T-cell (primary cell): ENCODE measurements at regions of chr4 and their contacts with region 1.

Region 1: DNA sequence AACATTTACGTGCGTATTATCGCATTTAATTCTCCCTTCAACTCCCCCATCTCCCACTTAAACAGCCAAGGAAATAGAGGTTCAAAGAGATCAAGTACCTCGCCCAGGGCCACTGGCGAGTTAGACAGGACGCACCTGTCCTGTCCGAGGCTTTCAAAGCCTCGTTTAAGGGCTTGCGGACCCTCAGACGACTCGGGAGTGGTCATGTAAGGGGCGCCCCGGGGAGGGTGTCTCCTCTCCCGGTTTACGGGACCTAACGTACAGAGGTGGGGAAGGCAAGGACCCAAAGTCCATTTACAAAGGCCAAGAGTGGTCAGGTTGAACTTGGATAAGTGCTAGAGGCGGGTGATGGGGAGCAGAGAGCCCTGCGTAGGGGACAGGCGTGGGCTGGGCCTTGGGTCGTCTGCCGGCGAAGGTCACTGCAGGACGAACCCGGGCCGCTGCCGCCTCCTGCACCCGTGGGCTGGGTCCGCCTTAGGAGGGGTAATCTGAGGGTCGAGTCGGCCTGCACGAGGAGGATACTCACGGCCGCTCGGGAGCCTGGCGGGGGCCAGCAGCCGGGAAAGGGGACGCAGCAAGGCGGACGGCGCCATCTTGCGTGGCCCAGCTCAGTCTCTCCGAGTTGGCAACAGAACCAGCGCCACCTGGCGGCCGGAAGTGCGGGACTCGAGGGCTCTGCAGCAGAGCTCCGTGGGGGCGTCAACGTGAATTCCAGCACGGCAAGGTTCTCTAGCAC is 5.9 kb upstream of the NAA15 start:
- DNase-seq: peak; percentile 88 to 100 (median 96)
- ATAC-seq: peak; percentile 96 to 97 (median 96)
- H3K4me3 ChIP-seq: peak overlapping the region; percentile 76 to 98
- H3K4me3 Mint-ChIP-seq: peak overlapping the region; percentile 92 to 100 (median 97)
- H3K27ac ChIP-seq: peak overlapping the region; percentile 85
- H3K27ac Mint-ChIP-seq: peak overlapping the region; percentile 94 to 96
- H3K4me1 ChIP-seq: peaks cover 13 to 15% of the 10 kb centered on the region in 2 experiments
- H3K4me1 Mint-ChIP-seq: peaks cover 27 to 37% (median 33%) of the 10 kb centered on the region in 3 donors
- H3K27me3 ChIP-seq: no peaks in the 10 kb centered on the region
- H3K27me3 Mint-ChIP-seq: no peaks in the 10 kb centered on the region

Region 2: DNA sequence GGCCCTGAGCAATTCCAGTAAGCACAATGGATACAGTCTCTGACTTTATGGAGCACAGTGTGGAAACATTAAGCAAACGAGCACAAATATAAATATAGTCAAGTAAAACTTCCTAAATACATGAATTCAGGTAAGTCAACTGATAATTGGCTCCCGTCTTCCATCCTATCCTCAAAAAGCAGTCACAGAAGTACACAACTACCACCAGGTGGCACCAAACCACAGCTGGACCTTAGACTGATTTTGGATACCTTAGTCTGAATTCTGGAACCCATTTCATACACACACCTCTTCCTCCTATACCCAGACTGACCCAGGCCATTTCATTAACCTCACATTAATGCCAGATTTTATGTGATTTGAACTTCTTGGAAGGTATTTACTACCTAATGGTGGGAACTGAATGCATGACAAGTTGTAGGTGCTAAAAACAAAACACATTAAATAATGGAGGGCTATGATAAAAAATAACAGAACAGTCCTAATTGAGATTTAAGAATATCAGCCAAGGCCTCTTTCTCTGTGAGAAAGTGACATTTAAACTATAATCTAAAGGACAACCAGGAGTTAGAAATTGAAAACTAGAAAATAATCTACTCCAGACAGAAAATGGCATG is 195.9 kb before region 1 on chr4:
- CTCF ChIA-PET with region 1: interaction called, 9 to 46 read pairs
- POLR2A ChIA-PET with region 1: interaction called in 1 of 2 experiments, 3 read pairs
- DNase-seq: peak; percentile 33 to 91 (median 63)
- ATAC-seq: peak; percentile 71 to 82 (median 78)
- H3K4me3 ChIP-seq: no peak overlapping the region
- H3K4me3 Mint-ChIP-seq: no peak overlapping the region
- H3K27ac ChIP-seq: no peak overlapping the region
- H3K27ac Mint-ChIP-seq: no peak overlapping the region
- H3K4me1 ChIP-seq: no peaks in the 10 kb centered on the region
- H3K4me1 Mint-ChIP-seq: peaks cover 2 to 9% (median 4%) of the 10 kb centered on the region in 3 donors
- H3K27me3 ChIP-seq: no peaks in the 10 kb centered on the region
- H3K27me3 Mint-ChIP-seq: no peaks in the 10 kb centered on the region

Region 3: DNA sequence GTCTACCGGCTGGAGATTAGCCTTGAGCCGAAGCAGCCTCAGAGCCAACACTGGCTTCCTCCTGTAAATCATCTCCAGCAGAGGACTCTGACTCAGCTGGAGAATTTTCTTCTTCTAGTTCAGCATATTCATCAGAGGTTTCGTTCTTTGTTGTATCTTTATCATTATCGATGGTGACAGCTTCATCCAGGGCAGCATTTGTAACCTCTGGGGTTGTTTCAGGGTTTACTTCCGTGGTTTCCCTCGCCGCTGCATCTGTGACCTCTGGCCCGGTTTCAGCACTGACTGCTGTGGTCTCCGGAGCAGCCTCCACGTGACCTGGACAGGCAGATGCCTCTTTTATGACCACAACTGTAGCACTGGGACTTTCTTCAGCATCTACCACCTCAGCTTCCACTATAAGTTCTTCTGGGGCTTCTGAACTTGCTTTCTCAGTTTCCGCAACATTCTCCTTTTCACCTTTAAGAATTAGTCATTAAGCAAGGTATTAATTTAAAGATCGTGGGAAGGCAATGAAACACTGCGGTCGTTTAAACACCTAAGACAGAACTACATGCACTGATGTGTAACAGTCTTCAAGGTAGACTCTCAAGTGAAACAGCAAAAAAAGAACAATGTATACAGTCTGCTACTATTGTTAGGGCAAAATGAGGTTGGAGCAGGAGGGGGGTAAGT is 28.7 kb before region 1 on chr4:
- CTCF ChIA-PET with region 1: interaction called in 1 of 2 experiments, 10 read pairs
- POLR2A ChIA-PET with region 1: interaction called, 3 to 4 read pairs
- DNase-seq: peak; percentile 29 to 81 (median 59)
- ATAC-seq: peak; percentile 90 to 97 (median 94)
- H3K4me3 ChIP-seq: peak overlapping the region; percentile 36 to 51
- H3K4me3 Mint-ChIP-seq: peak overlapping the region; percentile 66 to 81 (median 77)
- H3K27ac ChIP-seq: peak overlapping the region; percentile 65
- H3K27ac Mint-ChIP-seq: peak overlapping the region; percentile 68 to 87
- H3K4me1 ChIP-seq: peaks cover 0 to 6% of the 10 kb centered on the region in 2 experiments
- H3K4me1 Mint-ChIP-seq: peaks cover 10 to 17% (median 15%) of the 10 kb centered on the region in 3 donors
- H3K27me3 ChIP-seq: no peaks in the 10 kb centered on the region
- H3K27me3 Mint-ChIP-seq: no peaks in the 10 kb centered on the region

Region 4: GRCh38 chr4:140777894-140778293 is 1482.5 kb after region 1 on chr4:
- CTCF ChIA-PET with region 1: no interaction called
- POLR2A ChIA-PET with region 1: no interaction called
- DNase-seq: no peak
- ATAC-seq: no peak
- H3K4me3 ChIP-seq: no peak overlapping the region
- H3K4me3 Mint-ChIP-seq: no peak overlapping the region
- H3K27ac ChIP-seq: no peak overlapping the region
- H3K27ac Mint-ChIP-seq: no peak overlapping the region
- H3K4me1 ChIP-seq: no peaks in the 10 kb centered on the region
- H3K4me1 Mint-ChIP-seq: no peaks in the 10 kb centered on the region
- H3K27me3 ChIP-seq: no peaks in the 10 kb centered on the region
- H3K27me3 Mint-ChIP-seq: peaks cover 0 to 5% of the 10 kb centered on the region in 2 donors